Activated naive CD4-positive, alpha-beta T cell treated with anti-CD3 and anti-CD28 coated beads for 36 hours (primary cell): ENCODE measurements at regions of chr11 and their contacts with region 1.

Region 1: DNA sequence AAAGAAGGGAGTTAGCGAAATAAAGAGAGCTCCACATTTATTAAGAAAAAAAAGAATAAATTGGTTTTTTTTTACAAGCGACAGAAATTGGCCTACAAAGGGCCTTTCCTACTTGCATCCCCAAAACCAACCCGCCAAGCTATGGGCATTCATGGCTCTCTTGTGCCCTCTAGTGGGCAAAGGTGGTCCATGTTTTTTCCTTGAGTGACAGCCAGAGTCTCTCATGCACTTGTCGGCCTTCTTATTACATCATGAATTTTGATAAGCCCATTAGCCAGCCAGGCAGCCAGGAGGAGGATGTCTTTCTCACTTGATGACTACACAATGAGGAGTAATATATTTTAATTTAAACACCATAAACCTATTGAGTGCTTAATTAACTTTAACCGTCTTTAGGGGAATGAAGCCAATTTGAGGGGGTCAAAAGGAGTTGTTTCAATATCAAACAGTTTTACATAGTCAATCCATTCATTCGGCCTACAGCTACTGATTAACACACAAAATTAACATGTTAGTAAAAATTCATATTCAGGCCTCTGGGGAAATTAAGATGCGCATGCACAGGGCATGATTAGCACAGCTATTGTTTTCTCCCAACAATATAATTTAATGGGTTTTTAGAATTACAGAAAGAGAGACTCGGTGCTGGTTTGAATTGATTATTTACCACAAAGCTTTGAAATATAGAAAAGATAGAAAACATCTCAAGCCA is 85.5 kb downstream of the RCN1 start:
- DNase-seq: peak; percentile 91
- H3K4me3 Mint-ChIP-seq: no peak overlapping the region
- H3K27ac Mint-ChIP-seq: no peak overlapping the region
- H3K4me1 Mint-ChIP-seq: peaks cover 6% of the 10 kb centered on the region
- H3K27me3 Mint-ChIP-seq: no peaks in the 10 kb centered on the region

Region 2: GRCh38 chr11:31240338-31240904 is 936.0 kb before region 1 on chr11:
- CTCF ChIA-PET with region 1: interaction called, 10 read pairs
- intact Hi-C with region 1: loop called (anchors 1 kb)
- DNase-seq: peak; percentile 33
- H3K4me3 Mint-ChIP-seq: no peak overlapping the region
- H3K27ac Mint-ChIP-seq: no peak overlapping the region
- H3K4me1 Mint-ChIP-seq: no peaks in the 10 kb centered on the region
- H3K27me3 Mint-ChIP-seq: peaks cover 4% of the 10 kb centered on the region

Region 3: DNA sequence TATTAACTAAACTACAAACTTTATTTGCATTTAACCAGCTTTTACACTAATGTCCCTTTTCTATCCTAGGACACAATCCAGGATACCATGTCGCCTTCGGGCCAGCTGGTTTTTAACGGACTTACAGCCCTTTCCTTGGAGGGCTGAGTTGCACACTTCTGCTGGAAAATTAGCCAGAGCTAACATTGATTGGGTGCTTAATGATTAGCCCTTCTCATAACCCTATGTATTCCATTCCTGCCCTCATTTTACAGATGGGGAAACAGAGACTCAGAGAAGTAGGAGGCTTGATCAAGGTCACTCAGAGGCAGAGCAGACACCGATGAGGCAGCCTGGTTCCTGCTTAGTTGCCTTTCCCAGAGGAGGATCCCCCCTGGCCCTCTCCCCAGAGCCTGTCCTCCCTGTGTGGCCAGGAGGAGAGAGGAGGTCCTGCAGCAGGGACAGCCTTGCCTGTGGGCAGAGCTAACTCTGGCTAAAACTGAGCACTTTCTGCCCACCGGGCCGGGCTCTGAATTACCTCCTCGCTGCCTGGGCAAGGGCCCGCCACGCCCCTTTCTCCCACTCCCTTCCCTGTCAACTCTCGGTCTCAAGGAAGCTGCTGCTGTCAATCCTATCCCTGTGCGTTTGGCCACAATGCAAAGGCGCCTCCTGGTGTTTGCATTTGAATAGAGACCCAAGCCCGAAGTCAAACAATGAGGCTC is 305.6 kb before region 1 on chr11:
- CTCF ChIA-PET with region 1: no interaction called
- intact Hi-C with region 1: loop called (anchors 10 kb)
- DNase-seq: peak; percentile 51
- H3K4me3 Mint-ChIP-seq: no peak overlapping the region
- H3K27ac Mint-ChIP-seq: no peak overlapping the region
- H3K4me1 Mint-ChIP-seq: no peaks in the 10 kb centered on the region
- H3K27me3 Mint-ChIP-seq: peaks cover 30% of the 10 kb centered on the region

Region 4: DNA sequence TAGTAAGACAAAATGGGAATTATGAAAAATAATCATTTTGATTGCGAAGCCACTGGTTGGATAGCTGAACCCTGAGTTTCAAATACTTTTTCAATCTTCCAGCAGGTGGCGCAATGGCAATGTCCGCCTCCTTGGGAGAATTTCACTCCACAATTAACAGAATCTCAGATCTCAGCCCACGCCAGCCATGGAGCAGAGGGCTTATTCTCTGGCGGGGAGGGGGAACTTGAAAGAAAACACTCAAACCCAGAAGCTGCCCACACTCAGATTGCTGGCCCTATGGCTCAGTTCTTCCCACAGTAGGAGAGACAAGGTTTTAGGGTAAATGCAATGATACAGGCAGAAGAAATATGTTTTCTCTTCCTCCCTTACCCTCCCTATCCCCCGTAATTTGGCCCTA is 124.2 kb before region 1 on chr11:
- CTCF ChIA-PET with region 1: interaction called, 111 read pairs
- intact Hi-C with region 1: loop called (anchors 1 kb)
- DNase-seq: peak; percentile 72
- H3K4me3 Mint-ChIP-seq: no peak overlapping the region
- H3K27ac Mint-ChIP-seq: no peak overlapping the region
- H3K4me1 Mint-ChIP-seq: no peaks in the 10 kb centered on the region
- H3K27me3 Mint-ChIP-seq: peaks cover 27% of the 10 kb centered on the region

Region 5: GRCh38 chr11:32118025-32118974 is 58.1 kb before region 1 on chr11:
- CTCF ChIA-PET with region 1: no interaction called
- intact Hi-C with region 1: no loop called
- DNase-seq: no peak
- H3K4me3 Mint-ChIP-seq: no peak overlapping the region
- H3K27ac Mint-ChIP-seq: no peak overlapping the region
- H3K4me1 Mint-ChIP-seq: peaks cover 4% of the 10 kb centered on the region
- H3K27me3 Mint-ChIP-seq: peaks cover 20% of the 10 kb centered on the region

Region 6: DNA sequence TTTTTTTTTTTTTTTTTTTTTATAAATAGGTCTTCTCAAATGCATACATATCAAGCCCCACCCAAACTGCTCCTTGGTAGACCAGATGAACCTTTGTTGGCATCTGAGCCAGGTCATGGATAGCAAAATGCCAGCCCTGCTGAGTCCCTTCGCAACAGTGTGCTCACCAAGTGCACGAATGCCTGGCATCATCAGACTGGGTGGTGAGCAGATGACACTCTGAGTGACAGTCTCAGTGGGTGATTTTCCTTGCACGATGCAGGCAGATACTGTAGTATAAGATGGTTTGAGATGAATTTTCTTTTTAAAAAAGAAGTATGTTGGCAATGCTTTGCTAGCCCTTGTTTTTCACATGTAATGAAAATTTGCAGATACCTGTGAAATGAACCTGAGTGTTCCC is 11.5 kb before region 1 on chr11:
- CTCF ChIA-PET with region 1: interaction called, 18 read pairs
- intact Hi-C with region 1: no loop called
- DNase-seq: no peak
- H3K4me3 Mint-ChIP-seq: no peak overlapping the region
- H3K27ac Mint-ChIP-seq: no peak overlapping the region
- H3K4me1 Mint-ChIP-seq: peaks cover 12% of the 10 kb centered on the region
- H3K27me3 Mint-ChIP-seq: peaks cover 3% of the 10 kb centered on the region

Region 7: DNA sequence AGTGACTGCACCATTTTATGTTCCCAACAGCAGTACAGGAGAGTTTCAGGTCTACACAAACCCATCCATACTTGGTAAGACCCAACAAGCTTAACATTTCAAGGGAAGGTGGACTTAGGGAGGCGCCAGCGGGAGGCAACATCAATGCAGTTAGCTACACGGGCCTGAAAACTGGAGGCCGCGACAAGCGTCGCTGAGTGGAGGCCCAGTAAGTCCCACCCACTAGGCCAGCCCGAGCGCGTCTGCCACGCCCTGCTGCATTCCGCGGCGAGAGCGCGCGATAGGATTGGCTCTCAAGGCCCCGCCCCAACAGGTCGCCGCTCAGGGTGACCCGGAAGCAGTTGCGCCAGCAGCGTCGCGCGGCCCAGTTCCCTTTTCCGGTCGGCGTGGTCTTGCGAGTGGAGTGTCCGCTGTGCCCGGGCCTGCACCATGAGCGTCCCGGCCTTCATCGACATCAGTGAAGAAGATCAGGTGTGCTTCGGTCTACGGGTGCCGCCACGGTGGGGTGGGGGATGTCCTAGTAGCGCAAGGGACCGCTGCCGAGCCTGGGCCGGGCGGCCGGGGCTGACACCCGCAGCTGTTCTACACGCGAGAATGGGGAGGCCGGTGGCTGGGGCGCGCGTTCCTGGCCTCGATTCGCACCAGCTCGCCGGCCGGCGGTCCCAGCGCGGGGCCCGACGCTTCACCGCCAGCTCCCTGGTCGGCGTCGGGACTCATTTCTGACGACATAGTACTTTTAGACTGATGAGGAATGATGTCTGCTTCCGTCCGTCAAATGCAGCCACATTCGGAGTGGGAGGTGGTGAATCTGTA is 407.3 kb after region 1 on chr11 and contains the start of gene EIF3M:
- CTCF ChIA-PET with region 1: no interaction called
- intact Hi-C with region 1: no loop called
- DNase-seq: peak; percentile 97
- H3K4me3 Mint-ChIP-seq: peak within 1 kb of the TSS; percentile 95
- H3K27ac Mint-ChIP-seq: peak within 1 kb of the TSS; percentile 94
- H3K4me1 Mint-ChIP-seq: peaks cover 38% of the 10 kb centered on the region
- H3K27me3 Mint-ChIP-seq: no peaks in the 10 kb centered on the region
- total RNA-seq, gene EIF3M: 342 to 358 TPM